ENCODE measurements at regions of chr10 and their contacts with region 1.

Region 1: GRCh38 chr10:47047671-47048525 is 136.7 kb downstream of the PTPN20 start:
- DNase-seq: peak; percentile 86
- ATAC-seq: peak; percentile 77
- H3K4me3 Mint-ChIP-seq: no peak overlapping the region
- H3K27ac Mint-ChIP-seq: peak overlapping the region; percentile 32; the same call in 1 of the 2 replicates
- H3K4me1 Mint-ChIP-seq: no peaks in the 10 kb centered on the region
- H3K27me3 Mint-ChIP-seq: no peaks in the 10 kb centered on the region; the same call in 1 of the 2 replicates
- CTCF ChIP-seq: peak; percentile 96

Region 2: DNA sequence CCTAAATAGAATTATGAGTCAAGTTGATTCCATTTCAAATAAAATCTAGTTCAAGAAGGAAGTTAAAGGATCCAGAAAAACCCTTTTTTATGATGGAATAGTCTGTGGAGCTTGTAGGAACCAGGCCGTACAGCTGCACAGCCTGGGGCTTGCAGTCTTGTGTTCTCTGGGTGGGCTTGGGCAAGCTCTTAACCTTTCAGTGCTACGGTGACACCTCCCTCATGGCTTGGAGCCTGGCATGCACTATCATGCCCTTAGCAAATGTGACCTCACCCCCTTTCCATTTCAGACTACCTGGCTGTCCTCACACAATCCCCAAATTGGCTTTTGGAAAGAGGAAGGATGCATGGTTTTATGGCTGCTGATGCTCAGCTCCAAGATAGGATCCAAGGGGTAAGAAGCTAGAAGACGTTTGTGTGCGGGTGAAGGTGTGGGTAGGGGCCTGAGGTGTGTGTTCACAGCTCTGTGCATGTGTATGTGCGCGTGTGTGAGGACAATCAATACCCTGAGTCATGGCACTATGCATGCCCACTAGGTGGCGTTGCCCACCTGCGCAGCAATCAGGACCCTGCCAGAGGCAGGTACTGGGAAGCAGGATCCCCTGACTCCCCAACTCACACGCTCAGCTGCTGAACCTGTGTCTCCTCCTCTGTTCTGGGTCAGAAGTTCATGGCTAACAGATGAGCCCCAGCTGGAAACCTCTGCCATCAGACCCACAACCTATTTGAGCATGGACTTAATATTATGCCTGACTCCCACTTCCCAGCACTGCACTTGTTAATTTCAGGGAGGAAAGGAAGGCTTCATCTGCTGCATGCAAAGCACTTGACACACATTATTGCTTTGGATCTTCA is 23.3 kb before region 1 on chr10:
- CTCF ChIA-PET with region 1: interaction called, 33 read pairs
- POLR2A ChIA-PET with region 1: no interaction called
- DNase-seq: peak; percentile 79
- ATAC-seq: peak; percentile 96
- H3K4me3 Mint-ChIP-seq: no peak overlapping the region
- H3K27ac Mint-ChIP-seq: no peak overlapping the region
- H3K4me1 Mint-ChIP-seq: no peaks in the 10 kb centered on the region
- H3K27me3 Mint-ChIP-seq: no peaks in the 10 kb centered on the region
- CTCF ChIP-seq: peak; percentile 63

Region 3: DNA sequence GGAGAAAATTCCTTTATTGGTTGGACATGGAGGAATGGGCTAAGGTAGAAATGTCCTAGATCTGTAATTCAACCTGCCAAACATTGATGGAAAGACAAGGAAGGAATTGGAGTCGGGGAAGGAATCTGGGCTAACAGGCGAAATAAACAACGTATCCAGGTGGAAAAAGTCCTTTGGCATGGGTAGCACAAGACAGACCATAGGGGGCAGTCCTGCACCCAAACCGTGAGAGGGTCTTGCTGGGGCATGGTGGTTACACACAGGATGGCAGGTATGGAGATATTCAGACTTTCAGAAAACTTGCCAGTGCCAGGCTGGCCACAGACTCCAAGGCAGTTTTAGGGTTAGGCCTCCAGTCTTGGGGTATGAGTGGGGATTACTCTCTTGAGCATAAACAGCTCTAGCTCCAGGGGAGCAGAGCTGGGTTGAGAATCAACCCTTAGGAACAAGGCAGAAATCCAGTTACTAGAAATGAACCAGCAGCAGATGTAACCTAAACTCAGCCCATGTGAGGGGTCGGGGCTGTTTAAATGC is 63.5 kb after region 1 on chr10:
- CTCF ChIA-PET with region 1: interaction called, 10 read pairs
- POLR2A ChIA-PET with region 1: no interaction called
- DNase-seq: peak; percentile 40
- ATAC-seq: peak; percentile 74
- H3K4me3 Mint-ChIP-seq: no peak overlapping the region
- H3K27ac Mint-ChIP-seq: no peak overlapping the region
- H3K4me1 Mint-ChIP-seq: peaks cover 15% of the 10 kb centered on the region
- H3K27me3 Mint-ChIP-seq: peaks cover 7% of the 10 kb centered on the region
- CTCF ChIP-seq: peak; percentile 23; the same call in 1 of the 2 replicates

Region 4: DNA sequence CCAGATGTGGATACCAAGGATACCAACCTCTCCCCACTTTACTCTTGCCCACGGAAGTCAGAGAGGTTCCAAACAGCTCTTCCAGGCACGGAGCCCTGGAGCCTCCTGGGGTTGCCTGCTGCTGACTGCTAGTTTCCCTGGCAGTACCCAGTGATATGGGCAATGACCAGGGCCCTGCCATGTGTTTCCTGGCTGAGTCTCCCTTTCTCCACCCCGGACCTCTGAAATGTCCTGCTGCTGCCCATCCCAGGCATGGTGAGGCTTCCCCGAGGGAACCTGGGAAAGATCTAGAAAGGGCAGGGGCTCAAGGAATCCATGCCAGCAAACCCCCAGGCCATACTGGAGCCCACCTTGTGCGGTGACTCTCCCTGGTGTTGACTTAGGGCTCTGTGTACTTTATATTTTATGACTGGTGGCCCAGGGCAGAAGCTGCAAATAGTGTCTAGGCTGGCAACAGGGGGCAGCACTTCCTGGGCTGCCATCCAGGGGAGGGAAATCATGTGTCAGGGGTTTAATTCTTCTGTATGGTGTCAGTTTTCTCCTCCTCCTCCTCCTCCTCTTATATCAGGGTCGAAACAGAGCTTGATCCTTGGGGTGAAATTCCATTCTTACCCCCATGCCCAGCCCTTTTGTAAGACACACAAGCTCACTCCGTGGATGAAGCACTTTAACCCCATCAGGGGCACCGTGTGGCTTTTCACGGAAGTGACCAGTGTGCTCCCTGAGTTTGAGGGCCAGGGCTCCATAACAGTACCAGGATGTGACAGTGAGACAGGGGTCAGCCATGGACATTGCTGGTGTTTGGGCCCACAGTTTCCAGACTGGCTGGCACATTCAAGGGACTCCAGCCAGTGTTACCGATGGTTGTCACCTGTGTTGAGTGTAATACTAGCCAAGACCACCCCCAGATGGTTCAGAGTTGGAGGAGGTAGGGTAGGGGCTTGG is 189.7 kb after region 1 on chr10:
- CTCF ChIA-PET with region 1: interaction called, 12 read pairs
- POLR2A ChIA-PET with region 1: no interaction called
- DNase-seq: no peak
- ATAC-seq: peak; percentile 53
- H3K4me3 Mint-ChIP-seq: no peak overlapping the region
- H3K27ac Mint-ChIP-seq: no peak overlapping the region
- H3K4me1 Mint-ChIP-seq: peaks cover 8% of the 10 kb centered on the region
- H3K27me3 Mint-ChIP-seq: no peaks in the 10 kb centered on the region
- CTCF ChIP-seq: no peak

Region 5: GRCh38 chr10:47300429-47300931 is 252.6 kb after region 1 on chr10:
- CTCF ChIA-PET with region 1: interaction called, 13 read pairs
- POLR2A ChIA-PET with region 1: no interaction called
- DNase-seq: peak; percentile 42
- ATAC-seq: peak; percentile 64
- H3K4me3 Mint-ChIP-seq: peak overlapping the region; percentile 77
- H3K27ac Mint-ChIP-seq: no peak overlapping the region
- H3K4me1 Mint-ChIP-seq: peaks cover 21% of the 10 kb centered on the region
- H3K27me3 Mint-ChIP-seq: peaks cover 47% of the 10 kb centered on the region
- CTCF ChIP-seq: no peak